Activated B cell treated with CpG ODN at 0.5 μM for 24 hours (primary cell): ENCODE measurements at regions of chr3 and their contacts with region 1.

Region 1: GRCh38 chr3:160956806-160957205 is 148.3 kb downstream of the B3GALNT1 start:
- DNase-seq: no peak
- ATAC-seq: peak; percentile 54
- H3K4me3 Mint-ChIP-seq: no peak overlapping the region
- H3K27ac Mint-ChIP-seq: no peak overlapping the region
- H3K4me1 Mint-ChIP-seq: no peaks in the 10 kb centered on the region
- H3K27me3 Mint-ChIP-seq: peaks cover 2% of the 10 kb centered on the region
- CTCF ChIP-seq: no peak

Region 2: DNA sequence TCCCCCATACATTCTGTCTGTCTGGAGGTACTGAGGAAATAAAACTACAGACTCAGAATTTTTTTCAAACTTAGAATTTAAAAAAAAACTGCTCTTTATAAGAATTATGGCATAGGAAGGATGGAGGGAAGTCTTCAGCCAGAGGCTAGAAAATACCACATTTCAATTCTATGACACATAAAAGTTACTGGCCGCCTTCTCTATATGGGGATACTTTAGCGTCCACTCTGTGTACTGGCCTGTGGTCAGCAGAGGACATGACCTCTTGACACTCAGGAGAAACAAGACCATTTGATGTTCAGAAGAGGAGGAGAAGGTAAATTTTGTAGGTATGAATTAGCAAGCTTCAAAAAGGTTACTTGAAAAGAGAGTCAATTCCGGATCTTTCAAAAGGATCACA is 1737.6 kb before region 1 on chr3:
- CTCF ChIA-PET with region 1: no interaction called
- POLR2A ChIA-PET with region 1: no interaction called
- intact Hi-C with region 1: no loop called
- DNase-seq: no peak
- ATAC-seq: no peak
- H3K4me3 Mint-ChIP-seq: no peak overlapping the region
- H3K27ac Mint-ChIP-seq: no peak overlapping the region
- H3K4me1 Mint-ChIP-seq: no peaks in the 10 kb centered on the region
- H3K27me3 Mint-ChIP-seq: peaks cover 10% of the 10 kb centered on the region
- CTCF ChIP-seq: no peak

Region 3: GRCh38 chr3:160911411-160911810 is 45.4 kb before region 1 on chr3:
- CTCF ChIA-PET with region 1: no interaction called
- POLR2A ChIA-PET with region 1: no interaction called
- intact Hi-C with region 1: no loop called
- DNase-seq: no peak
- ATAC-seq: no peak
- H3K4me3 Mint-ChIP-seq: no peak overlapping the region
- H3K27ac Mint-ChIP-seq: no peak overlapping the region
- H3K4me1 Mint-ChIP-seq: no peaks in the 10 kb centered on the region
- H3K27me3 Mint-ChIP-seq: peaks cover 4% of the 10 kb centered on the region
- CTCF ChIP-seq: no peak

Region 4: GRCh38 chr3:161008063-161008462 is 51.3 kb after region 1 on chr3:
- CTCF ChIA-PET with region 1: no interaction called
- POLR2A ChIA-PET with region 1: no interaction called
- intact Hi-C with region 1: no loop called
- DNase-seq: no peak
- ATAC-seq: no peak
- H3K4me3 Mint-ChIP-seq: no peak overlapping the region
- H3K27ac Mint-ChIP-seq: no peak overlapping the region
- H3K4me1 Mint-ChIP-seq: no peaks in the 10 kb centered on the region
- H3K27me3 Mint-ChIP-seq: no peaks in the 10 kb centered on the region
- CTCF ChIP-seq: no peak

Region 5: DNA sequence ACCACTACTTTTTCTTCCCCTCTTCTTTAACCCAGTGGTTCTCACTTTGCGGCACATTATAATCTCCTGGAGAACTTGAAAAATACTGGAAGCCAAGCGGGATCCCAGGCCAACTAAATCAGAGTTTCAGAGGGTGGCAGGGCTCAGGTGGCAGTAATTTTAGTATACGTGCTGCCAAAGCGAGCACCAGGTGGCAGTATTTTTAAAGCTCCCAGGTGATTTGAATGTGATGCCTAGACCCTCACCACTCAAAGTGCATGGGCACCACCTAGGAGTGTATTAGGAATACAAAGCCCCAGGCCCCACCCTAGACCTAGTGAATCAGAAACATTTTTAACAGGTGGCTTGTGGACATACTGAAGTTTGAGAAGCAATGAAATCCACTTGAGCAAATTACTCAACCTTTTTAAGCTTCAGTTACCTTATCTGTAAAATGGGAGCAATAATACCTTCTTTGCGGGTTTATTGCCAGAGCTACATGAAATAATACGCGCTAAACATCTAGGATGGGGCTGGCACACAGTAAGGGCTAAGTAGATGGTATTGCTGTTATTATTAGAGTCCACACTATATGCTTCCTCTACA is 140.1 kb after region 1 on chr3:
- CTCF ChIA-PET with region 1: interaction called, 13 read pairs
- POLR2A ChIA-PET with region 1: no interaction called
- intact Hi-C with region 1: no loop called
- DNase-seq: no peak
- ATAC-seq: peak; percentile 21
- H3K4me3 Mint-ChIP-seq: no peak overlapping the region
- H3K27ac Mint-ChIP-seq: no peak overlapping the region
- H3K4me1 Mint-ChIP-seq: no peaks in the 10 kb centered on the region
- H3K27me3 Mint-ChIP-seq: no peaks in the 10 kb centered on the region
- CTCF ChIP-seq: no peak

Region 6: DNA sequence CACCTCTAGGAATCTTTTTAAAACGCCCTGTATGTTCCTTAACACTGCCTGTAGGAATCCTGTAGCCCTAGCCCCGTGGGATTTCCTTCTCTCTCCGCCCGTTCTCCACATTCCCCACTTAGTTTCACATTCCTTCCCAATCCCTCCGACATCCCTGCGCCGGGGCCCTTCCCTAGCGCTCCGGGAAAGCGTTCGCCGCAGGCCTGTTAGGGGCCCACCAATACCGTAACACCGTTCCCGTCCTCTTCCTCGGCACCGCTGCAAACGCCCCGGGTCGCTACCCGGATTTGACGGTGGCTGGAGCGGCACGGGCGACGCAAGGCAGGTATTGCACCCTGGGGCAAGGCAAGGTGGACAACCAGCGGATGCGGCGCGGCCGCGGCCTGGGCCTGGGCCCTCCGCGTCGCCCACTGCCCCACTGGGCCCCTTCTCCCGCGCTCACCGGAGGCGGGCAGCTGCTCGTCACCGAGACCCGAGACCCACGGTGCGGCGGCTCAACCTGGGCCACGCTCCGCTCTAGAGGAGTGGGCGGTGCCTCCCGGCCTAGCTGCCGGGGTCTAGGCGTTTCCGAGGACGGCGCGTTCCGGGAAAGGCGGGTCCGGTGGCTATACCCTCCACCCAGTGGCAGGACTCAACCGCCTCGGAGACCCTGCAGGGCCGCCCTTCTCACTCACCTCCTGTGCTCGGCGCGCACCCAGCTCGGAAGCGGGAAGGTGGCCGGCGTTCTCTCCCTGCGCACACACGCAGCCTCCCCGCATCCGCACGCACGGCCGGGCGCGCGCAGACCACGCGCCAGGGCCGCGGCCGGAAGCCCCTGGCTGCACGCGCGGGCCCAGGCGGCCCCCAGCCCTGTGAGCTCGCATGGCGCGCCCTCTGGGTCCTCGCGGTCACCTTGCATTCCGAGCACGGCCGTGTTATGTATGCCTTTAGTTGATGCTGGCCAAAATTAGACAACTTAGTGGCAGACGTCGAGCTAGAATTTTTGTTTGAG is 148.1 kb after region 1 on chr3 and contains the start of gene B3GALNT1:
- CTCF ChIA-PET with region 1: interaction called, 7 read pairs
- POLR2A ChIA-PET with region 1: no interaction called
- intact Hi-C with region 1: loop called (anchors 1 kb)
- DNase-seq: peak; percentile 39
- ATAC-seq: peak; percentile 85
- H3K4me3 Mint-ChIP-seq: peak within 1 kb of the TSS; percentile 82
- H3K27ac Mint-ChIP-seq: no peak within 1 kb of the TSS
- H3K4me1 Mint-ChIP-seq: peaks cover 12% of the 10 kb centered on the region
- H3K27me3 Mint-ChIP-seq: peaks cover 8% of the 10 kb centered on the region
- CTCF ChIP-seq: no peak
- total RNA-seq, gene B3GALNT1: 4.6 and 8.5 TPM in 2 replicates

Region 7: GRCh38 chr3:161203485-161204098 is 246.8 kb after region 1 on chr3:
- CTCF ChIA-PET with region 1: interaction called, 4 read pairs
- POLR2A ChIA-PET with region 1: no interaction called
- intact Hi-C with region 1: loop called (anchors 1 kb)
- DNase-seq: no peak
- ATAC-seq: no peak
- H3K4me3 Mint-ChIP-seq: no peak overlapping the region
- H3K27ac Mint-ChIP-seq: no peak overlapping the region
- H3K4me1 Mint-ChIP-seq: no peaks in the 10 kb centered on the region
- H3K27me3 Mint-ChIP-seq: peaks cover 2% of the 10 kb centered on the region
- CTCF ChIP-seq: no peak

Region 8: GRCh38 chr3:161409069-161409468 is 452.3 kb after region 1 on chr3:
- CTCF ChIA-PET with region 1: no interaction called
- POLR2A ChIA-PET with region 1: no interaction called
- intact Hi-C with region 1: loop called (anchors 5 kb)
- DNase-seq: no peak
- ATAC-seq: no peak
- H3K4me3 Mint-ChIP-seq: no peak overlapping the region
- H3K27ac Mint-ChIP-seq: no peak overlapping the region
- H3K4me1 Mint-ChIP-seq: no peaks in the 10 kb centered on the region
- H3K27me3 Mint-ChIP-seq: peaks cover 8% of the 10 kb centered on the region
- CTCF ChIP-seq: no peak